Caco-2 (cell line): ENCODE measurements at regions of chr12 and their contacts with region 1.

Region 1: GRCh38 chr12:53757095-53757770 is 5.5 kb upstream of the CISTR start:
- DNase-seq: peak in 1 of 2 experiments; percentile 65
- H3K4me3 ChIP-seq: no peak overlapping the region
- H3K4me3 Mint-ChIP-seq: no peak overlapping the region
- H3K27ac Mint-ChIP-seq: no peak overlapping the region
- H3K4me1 ChIP-seq: no peaks in the 10 kb centered on the region
- H3K4me1 Mint-ChIP-seq: no peaks in the 10 kb centered on the region
- H3K27me3 ChIP-seq: no peaks in the 10 kb centered on the region
- H3K27me3 Mint-ChIP-seq: peaks cover 23% of the 10 kb centered on the region
- CTCF ChIP-seq: peak; percentile 72 to 76

Region 2: GRCh38 chr12:54191550-54192022 is 434.4 kb after region 1 on chr12:
- CTCF ChIA-PET with region 1: interaction called, 15 read pairs
- POLR2A ChIA-PET with region 1: no interaction called
- intact Hi-C with region 1: no loop called
- DNase-seq: peak; percentile 86 to 87
- H3K4me3 ChIP-seq: no peak overlapping the region
- H3K4me3 Mint-ChIP-seq: no peak overlapping the region
- H3K27ac Mint-ChIP-seq: no peak overlapping the region
- H3K4me1 ChIP-seq: peaks cover 37% of the 10 kb centered on the region
- H3K4me1 Mint-ChIP-seq: peaks cover 16% of the 10 kb centered on the region
- H3K27me3 ChIP-seq: no peaks in the 10 kb centered on the region
- H3K27me3 Mint-ChIP-seq: no peaks in the 10 kb centered on the region
- CTCF ChIP-seq: peak; percentile 74 to 80

Region 3: GRCh38 chr12:54214553-54215406 is 457.5 kb after region 1 on chr12:
- CTCF ChIA-PET with region 1: no interaction called
- POLR2A ChIA-PET with region 1: no interaction called
- intact Hi-C with region 1: loop called (anchors 10 kb)
- DNase-seq: peak; percentile 89 to 92
- H3K4me3 ChIP-seq: 0 out of 2 replicates have a peak overlapping the region, but pooled peaks have one; percentile 5
- H3K4me3 Mint-ChIP-seq: peak overlapping the region; percentile 42
- H3K27ac Mint-ChIP-seq: no peak overlapping the region
- H3K4me1 ChIP-seq: no peaks in the 10 kb centered on the region
- H3K4me1 Mint-ChIP-seq: no peaks in the 10 kb centered on the region
- H3K27me3 ChIP-seq: no peaks in the 10 kb centered on the region
- H3K27me3 Mint-ChIP-seq: no peaks in the 10 kb centered on the region
- CTCF ChIP-seq: peak; percentile 97 to 98